Endothelial cell of umbilical vein (primary cell): ENCODE measurements at regions of chr16 and their contacts with region 1.

Region 1: DNA sequence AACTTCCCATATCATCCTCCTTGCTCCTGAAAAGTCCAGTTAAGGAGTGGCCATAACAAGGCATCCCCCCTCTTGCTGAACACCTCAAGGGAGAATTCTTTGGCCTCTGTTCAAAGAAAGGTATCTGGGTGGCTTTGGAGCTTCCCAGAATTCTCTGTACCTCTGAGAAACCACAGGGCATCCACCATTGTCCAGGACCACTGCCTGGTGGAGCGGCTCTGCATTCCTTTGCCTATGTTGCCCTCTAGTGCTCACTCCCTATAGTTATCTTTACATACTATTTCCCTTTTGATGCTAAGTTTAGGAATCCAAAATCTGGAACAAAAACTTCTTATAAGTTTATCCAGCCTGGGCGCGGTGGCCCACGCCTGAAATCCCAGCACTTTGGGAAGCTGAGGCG is 30.3 kb downstream of the CHD9NB start:
- DNase-seq: peak; percentile 53
- H3K4me3 ChIP-seq: no peak overlapping the region
- H3K27ac ChIP-seq: no peak overlapping the region
- H3K4me1 ChIP-seq: no peaks in the 10 kb centered on the region
- H3K27me3 ChIP-seq: no peaks in the 10 kb centered on the region
- CTCF ChIP-seq: peak; percentile 49 to 54
- POLR2A ChIP-seq: no peak

Region 2: DNA sequence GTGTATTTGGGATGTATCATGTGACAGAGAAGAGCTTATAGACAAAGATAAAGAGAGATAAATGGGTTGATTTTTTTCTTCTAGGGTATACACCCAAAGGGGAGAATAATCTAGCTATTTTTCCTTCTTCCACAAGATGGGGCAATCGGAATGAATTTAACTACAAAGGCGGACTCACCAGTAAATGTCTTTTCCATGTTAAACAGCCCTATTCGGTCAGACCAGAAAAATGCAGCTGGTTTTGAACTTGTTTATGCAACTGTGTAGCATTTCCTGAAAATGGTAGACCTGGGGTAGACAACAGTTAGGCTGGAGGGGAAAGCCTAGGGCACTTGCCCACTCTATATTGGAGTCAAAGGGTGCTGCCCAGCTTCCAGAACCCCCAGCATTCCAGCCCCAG is 952.5 kb before region 1 on chr16:
- CTCF ChIA-PET with region 1: no interaction called
- POLR2A ChIA-PET with region 1: no interaction called
- dilution Hi-C with region 1: no loop called
- intact Hi-C with region 1: loop called (anchors 2 kb)
- DNase-seq: no peak
- H3K4me3 ChIP-seq: no peak overlapping the region
- H3K27ac ChIP-seq: no peak overlapping the region
- H3K4me1 ChIP-seq: no peaks in the 10 kb centered on the region
- H3K27me3 ChIP-seq: no peaks in the 10 kb centered on the region
- CTCF ChIP-seq: no peak
- POLR2A ChIP-seq: no peak

Region 3: DNA sequence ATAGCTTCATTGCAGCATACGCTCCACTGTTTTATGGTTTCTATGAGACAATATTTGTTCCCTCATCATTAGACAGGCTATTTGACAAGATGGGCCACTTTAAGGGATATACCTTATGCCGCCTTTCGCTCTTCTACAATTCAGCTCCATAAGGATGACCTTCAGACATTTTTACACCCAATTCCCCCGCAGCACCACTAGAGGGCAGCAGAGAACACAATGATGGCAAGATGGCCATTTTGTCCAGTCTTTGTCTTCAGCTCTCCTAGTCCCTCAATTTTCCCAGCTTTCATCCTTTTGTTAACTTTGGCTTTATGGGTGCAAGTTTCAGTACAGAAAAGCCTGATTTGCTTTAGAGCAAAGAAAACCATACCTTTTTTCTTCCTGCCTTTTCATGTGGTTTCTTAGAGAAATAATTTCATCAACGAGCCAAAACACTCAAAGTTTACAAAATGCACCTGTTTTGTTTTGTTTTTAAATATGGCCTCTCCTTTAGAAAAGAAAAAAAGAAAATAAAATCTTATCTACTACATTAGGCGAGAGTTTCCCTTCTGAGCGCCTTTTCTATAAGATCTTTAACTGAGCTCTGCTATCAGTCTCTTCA is 830.7 kb before region 1 on chr16:
- CTCF ChIA-PET with region 1: interaction called, 146 read pairs
- POLR2A ChIA-PET with region 1: no interaction called
- dilution Hi-C with region 1: no loop called
- intact Hi-C with region 1: loop called (anchors 1 kb)
- DNase-seq: peak; percentile 60
- H3K4me3 ChIP-seq: no peak overlapping the region
- H3K27ac ChIP-seq: no peak overlapping the region
- H3K4me1 ChIP-seq: no peaks in the 10 kb centered on the region
- H3K27me3 ChIP-seq: no peaks in the 10 kb centered on the region
- CTCF ChIP-seq: peak; percentile 86 to 88
- POLR2A ChIP-seq: no peak

Region 4: GRCh38 chr16:52976539-52977167 is 45.7 kb before region 1 on chr16:
- CTCF ChIA-PET with region 1: interaction called, 10 read pairs
- POLR2A ChIA-PET with region 1: no interaction called
- dilution Hi-C with region 1: no loop called
- intact Hi-C with region 1: no loop called
- DNase-seq: peak; percentile 17
- H3K4me3 ChIP-seq: no peak overlapping the region
- H3K27ac ChIP-seq: no peak overlapping the region
- H3K4me1 ChIP-seq: no peaks in the 10 kb centered on the region
- H3K27me3 ChIP-seq: no peaks in the 10 kb centered on the region
- CTCF ChIP-seq: peak in 1 of 2 donors; percentile 31
- POLR2A ChIP-seq: no peak

Region 5: DNA sequence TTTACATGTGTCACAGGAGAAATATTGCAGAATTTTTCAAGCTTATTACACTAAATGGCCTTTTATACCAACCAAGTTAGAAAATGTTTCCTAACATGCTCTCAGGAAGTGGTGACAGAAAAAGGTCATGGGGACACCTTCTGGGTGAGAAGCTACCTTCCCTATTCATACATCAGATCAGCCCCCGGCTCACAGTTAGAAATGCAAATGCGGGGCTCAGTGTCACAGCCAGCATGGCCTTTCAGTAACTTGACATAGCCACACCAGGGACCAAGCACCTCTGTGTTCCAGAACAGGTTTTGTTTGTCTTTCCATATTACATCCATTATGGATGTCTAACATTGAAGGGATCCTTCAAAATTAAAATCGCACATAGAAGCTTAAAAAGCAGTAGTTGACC is 29.2 kb before region 1 on chr16:
- CTCF ChIA-PET with region 1: no interaction called
- POLR2A ChIA-PET with region 1: no interaction called
- dilution Hi-C with region 1: no loop called
- intact Hi-C with region 1: no loop called
- DNase-seq: no peak
- H3K4me3 ChIP-seq: no peak overlapping the region
- H3K27ac ChIP-seq: no peak overlapping the region
- H3K4me1 ChIP-seq: no peaks in the 10 kb centered on the region
- H3K27me3 ChIP-seq: no peaks in the 10 kb centered on the region
- CTCF ChIP-seq: no peak
- POLR2A ChIP-seq: no peak